ENCODE measurements at regions of chr5 and their contacts with region 1.

Region 1: GRCh38 chr5:146426853-146427618 is 20.1 kb upstream of the TCERG1 start:
- DNase-seq: peak; percentile 78
- H3K4me3 ChIP-seq: no peak overlapping the region
- H3K27ac ChIP-seq: no peak overlapping the region
- H3K4me1 ChIP-seq: no peaks in the 10 kb centered on the region
- H3K27me3 ChIP-seq: no peaks in the 10 kb centered on the region
- CTCF ChIP-seq: peak; percentile 77

Region 2: GRCh38 chr5:145681686-145682085 is 745.4 kb before region 1 on chr5:
- CTCF ChIA-PET with region 1: no interaction called
- POLR2A ChIA-PET with region 1: no interaction called
- intact Hi-C with region 1: loop called (anchors 10 kb)
- DNase-seq: peak; percentile 89
- H3K4me3 ChIP-seq: no peak overlapping the region
- H3K27ac ChIP-seq: no peak overlapping the region
- H3K4me1 ChIP-seq: peaks cover 26% of the 10 kb centered on the region
- H3K27me3 ChIP-seq: no peaks in the 10 kb centered on the region
- CTCF ChIP-seq: peak; percentile 89

Region 3: DNA sequence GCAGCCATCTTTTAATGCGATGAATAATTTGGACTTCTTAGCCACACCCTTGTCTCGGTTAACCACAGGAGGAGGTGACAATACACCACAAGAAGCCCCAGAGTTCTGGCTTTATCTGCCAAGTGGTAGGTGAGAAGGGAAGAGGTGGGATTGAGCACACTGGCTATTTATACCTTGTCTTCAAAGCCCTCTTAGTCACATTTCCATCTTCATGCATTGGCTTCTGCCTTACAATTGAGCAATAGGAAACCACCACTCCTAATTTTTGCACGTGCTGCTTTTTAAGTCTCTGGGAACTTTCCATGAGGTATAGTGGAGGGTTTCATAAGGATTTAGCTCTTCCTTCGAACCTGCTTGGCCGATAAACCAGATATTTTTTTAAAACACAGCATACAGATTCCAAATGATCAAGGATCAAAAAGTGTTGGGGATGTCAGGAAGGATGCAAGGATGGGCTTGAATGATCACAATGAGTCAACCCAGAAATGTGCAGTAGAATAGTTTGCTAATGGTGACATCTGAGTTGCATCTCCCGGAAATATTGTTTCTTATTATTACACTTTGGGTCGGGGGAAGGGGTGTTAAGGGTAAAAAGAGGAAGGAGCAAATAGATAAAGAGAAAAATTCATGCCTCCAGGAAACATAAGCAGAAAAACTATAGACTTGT is 347.2 kb before region 1 on chr5:
- CTCF ChIA-PET with region 1: no interaction called
- POLR2A ChIA-PET with region 1: no interaction called
- intact Hi-C with region 1: loop called (anchors 10 kb)
- DNase-seq: no peak
- H3K4me3 ChIP-seq: no peak overlapping the region
- H3K27ac ChIP-seq: no peak overlapping the region
- H3K4me1 ChIP-seq: no peaks in the 10 kb centered on the region
- H3K27me3 ChIP-seq: no peaks in the 10 kb centered on the region
- CTCF ChIP-seq: no peak

Region 4: GRCh38 chr5:146158257-146158656 is 268.8 kb before region 1 on chr5:
- CTCF ChIA-PET with region 1: no interaction called
- POLR2A ChIA-PET with region 1: no interaction called
- intact Hi-C with region 1: loop called (anchors 5 kb)
- DNase-seq: no peak
- H3K4me3 ChIP-seq: no peak overlapping the region
- H3K27ac ChIP-seq: no peak overlapping the region
- H3K4me1 ChIP-seq: no peaks in the 10 kb centered on the region
- H3K27me3 ChIP-seq: no peaks in the 10 kb centered on the region
- CTCF ChIP-seq: no peak

Region 5: DNA sequence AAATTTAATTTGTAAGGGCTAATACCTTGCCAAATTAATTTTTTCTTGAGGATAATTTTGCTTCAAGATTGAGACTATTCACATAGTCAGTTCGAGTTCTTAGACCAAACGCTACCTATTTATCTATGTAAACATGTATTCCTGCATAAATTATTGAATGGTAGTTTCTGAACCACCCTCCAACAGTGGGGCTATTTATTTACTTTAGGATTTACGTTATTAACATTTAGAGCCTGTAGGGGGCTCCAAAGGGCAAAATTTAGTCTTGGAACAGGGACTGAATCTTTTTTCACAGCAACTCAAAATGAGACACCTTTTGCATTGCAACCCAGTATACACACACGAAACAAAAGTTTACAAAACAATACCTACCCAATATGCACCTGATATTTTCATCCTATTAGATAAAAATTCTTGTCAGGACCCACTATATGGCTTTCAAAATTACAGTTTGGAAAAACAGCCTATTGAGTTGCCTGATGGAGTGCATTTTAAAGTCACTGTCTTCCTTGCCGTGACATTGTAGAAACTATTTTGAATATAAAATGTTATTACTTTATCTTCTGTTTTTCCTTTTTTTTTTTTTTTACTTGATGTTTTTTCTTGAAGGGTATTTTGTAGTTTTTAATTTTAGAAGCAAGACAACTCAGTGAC is 135.5 kb before region 1 on chr5:
- CTCF ChIA-PET with region 1: no interaction called
- POLR2A ChIA-PET with region 1: no interaction called
- intact Hi-C with region 1: loop called (anchors 1 kb)
- DNase-seq: peak; percentile 78
- H3K4me3 ChIP-seq: no peak overlapping the region
- H3K27ac ChIP-seq: no peak overlapping the region
- H3K4me1 ChIP-seq: no peaks in the 10 kb centered on the region
- H3K27me3 ChIP-seq: no peaks in the 10 kb centered on the region
- CTCF ChIP-seq: peak; percentile 76

Region 6: DNA sequence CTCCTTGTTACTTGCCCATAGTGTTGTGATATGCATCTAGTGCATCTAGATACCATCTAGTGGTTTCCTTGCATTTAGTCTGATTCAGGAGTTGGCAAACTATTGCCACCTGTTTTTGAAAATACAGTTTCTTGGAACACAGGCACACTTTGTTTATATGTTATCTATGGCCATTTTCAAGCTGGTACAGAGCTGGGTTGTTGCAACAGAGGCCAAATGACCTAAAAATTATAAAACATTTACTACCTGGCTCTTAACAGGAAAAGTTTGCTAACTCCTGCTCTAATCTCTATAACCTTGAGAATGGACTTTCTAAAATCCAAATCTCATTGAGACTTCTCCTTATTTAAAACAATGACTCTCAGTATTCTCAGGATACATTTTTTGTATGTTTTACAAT is 1937.3 kb after region 1 on chr5:
- CTCF ChIA-PET with region 1: no interaction called
- POLR2A ChIA-PET with region 1: no interaction called
- intact Hi-C with region 1: no loop called
- DNase-seq: no peak
- H3K4me3 ChIP-seq: no peak overlapping the region
- H3K27ac ChIP-seq: no peak overlapping the region
- H3K4me1 ChIP-seq: no peaks in the 10 kb centered on the region
- H3K27me3 ChIP-seq: peaks cover 31% of the 10 kb centered on the region
- CTCF ChIP-seq: no peak